ENCODE measurements at regions of chr20 and their contacts with region 1.

Region 1: GRCh38 chr20:49775229-49775693 is 37.4 kb upstream of the SLC9A8 start:
- DNase-seq: peak; percentile 98
- H3K4me3 ChIP-seq: no peak overlapping the region
- H3K27ac ChIP-seq: peak overlapping the region; percentile 95
- H3K4me1 ChIP-seq: peaks cover 37% of the 10 kb centered on the region
- H3K27me3 ChIP-seq: no peaks in the 10 kb centered on the region
- CTCF ChIP-seq: no peak
- POLR2A ChIP-seq: peak; percentile 21

Region 2: GRCh38 chr20:49245921-49246740 is 529.1 kb before region 1 on chr20:
- CTCF ChIA-PET with region 1: no interaction called
- POLR2A ChIA-PET with region 1: no interaction called
- dilution Hi-C with region 1: no loop called
- intact Hi-C with region 1: no loop called
- DNase-seq: peak; percentile 72
- H3K4me3 ChIP-seq: no peak overlapping the region
- H3K27ac ChIP-seq: no peak overlapping the region
- H3K4me1 ChIP-seq: peaks cover 26% of the 10 kb centered on the region
- H3K27me3 ChIP-seq: no peaks in the 10 kb centered on the region
- CTCF ChIP-seq: peak; percentile 68
- POLR2A ChIP-seq: no peak

Region 3: DNA sequence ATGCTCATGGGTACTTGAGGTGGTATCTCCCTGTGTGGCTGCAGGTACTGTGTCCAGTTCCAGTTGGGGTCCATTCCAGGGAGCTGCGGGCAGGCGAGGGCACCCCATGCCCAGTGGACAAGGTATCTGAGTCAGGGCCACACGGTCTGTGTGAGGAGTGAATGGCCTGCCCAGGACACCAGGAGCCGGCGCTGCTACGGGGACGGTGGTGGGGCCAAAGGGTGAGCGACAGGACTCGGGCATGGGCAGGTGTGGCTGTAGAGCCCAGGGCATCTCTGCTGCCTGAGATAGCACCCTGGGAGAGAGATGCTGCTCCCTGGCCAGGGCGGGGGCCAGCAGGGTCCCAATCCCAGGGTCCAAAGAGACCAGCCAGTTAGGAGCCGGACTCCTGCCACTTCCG is 439.8 kb before region 1 on chr20:
- CTCF ChIA-PET with region 1: no interaction called
- POLR2A ChIA-PET with region 1: no interaction called
- dilution Hi-C with region 1: no loop called
- intact Hi-C with region 1: no loop called
- DNase-seq: no peak
- H3K4me3 ChIP-seq: no peak overlapping the region
- H3K27ac ChIP-seq: no peak overlapping the region
- H3K4me1 ChIP-seq: no peaks in the 10 kb centered on the region
- H3K27me3 ChIP-seq: peaks cover 0 to 6% of the 10 kb centered on the region in 2 experiments
- CTCF ChIP-seq: no peak
- POLR2A ChIP-seq: no peak

Region 4: DNA sequence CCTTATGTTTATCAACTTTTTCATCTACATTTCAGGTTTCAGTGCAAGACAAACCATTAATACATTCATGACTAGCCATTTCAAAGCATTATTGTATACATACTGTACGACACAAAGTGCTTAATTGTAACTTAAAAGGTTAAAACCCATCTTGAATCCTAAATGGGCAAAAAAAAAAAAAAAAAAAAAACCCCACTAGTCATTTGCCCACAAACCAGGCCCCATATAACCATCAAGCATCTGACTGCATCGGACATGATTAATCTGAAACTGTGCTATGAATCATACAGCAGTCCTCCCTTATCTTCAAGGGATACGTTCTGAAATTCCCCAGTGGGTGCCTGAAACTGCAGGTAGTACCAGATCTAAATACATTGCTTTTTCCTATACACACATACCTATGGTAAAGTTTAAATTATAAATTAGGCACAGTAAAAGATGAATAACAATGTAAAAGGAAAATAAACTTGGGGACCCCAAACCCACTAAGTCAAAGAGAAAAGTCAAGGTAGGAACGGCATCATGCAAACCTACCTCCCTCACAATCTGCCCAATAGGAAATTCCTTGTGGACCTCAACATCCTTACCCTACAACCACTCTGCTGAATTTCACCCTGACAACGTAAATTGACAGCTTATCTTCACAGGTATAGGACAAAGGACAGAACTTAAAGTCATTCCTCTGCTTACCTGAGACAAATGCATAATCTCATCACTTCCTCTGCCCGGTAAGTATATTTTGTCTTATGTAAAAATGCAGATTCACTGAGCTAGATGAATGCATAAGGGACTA is 75.9 kb before region 1 on chr20:
- CTCF ChIA-PET with region 1: interaction called, 4 read pairs
- POLR2A ChIA-PET with region 1: no interaction called
- dilution Hi-C with region 1: no loop called
- intact Hi-C with region 1: loop called (anchors 1 kb)
- DNase-seq: peak; percentile 57
- H3K4me3 ChIP-seq: no peak overlapping the region
- H3K27ac ChIP-seq: peak overlapping the region; percentile 98
- H3K4me1 ChIP-seq: peaks cover 73% of the 10 kb centered on the region
- H3K27me3 ChIP-seq: no peaks in the 10 kb centered on the region
- CTCF ChIP-seq: no peak
- POLR2A ChIP-seq: no peak

Region 5: DNA sequence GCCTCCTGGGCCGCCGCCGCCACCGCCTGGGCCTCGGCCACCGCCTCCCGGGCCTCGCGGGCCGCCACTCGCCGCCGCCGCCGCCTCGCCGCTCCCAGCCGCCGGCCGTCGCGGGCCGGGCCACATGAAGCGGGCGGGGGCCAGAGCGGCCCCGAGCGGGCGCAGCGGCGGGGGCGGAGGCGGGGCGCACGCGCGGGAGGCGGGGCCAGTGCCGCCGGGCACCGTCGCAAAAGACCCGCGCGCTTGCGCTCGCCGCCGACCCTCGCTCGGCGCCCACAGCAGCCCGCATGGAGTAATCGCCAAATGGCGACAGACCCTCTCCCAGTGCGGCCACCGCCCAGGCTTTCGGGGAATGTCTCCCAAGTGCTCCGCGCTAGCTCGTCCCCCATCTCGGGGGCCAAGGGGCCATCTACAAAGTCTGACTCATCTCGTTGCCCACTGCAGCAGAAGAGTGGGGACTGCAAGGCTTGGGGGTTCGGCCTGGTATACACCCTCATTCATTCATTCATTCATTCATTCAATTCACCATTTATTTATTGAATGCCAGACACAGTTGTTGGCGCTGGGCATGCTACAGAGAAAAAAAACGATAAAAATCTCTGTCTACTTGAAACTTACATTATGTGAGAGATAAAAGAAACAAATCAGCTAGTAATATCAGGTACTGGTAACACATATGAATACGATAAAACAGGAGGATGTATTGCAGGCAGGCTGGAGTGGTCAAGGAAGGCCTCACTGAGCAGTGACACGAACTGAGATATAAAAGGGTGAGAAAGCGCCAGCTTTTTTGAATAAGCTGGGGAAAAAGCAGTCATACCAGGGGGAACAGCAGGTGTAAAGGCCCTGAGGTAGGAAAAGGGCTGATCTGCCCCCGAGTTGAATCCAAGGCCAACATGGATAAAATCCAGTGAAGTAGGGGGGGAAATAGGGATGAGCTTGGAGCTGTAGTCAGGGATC is 61.2 kb before region 1 on chr20 and contains the start of gene B4GALT5:
- CTCF ChIA-PET with region 1: interaction called, 3 read pairs
- POLR2A ChIA-PET with region 1: no interaction called
- dilution Hi-C with region 1: no loop called
- intact Hi-C with region 1: loop called (anchors 1 kb)
- DNase-seq: peak; percentile 78
- H3K4me3 ChIP-seq: peak within 1 kb of the TSS; percentile 81 to 93 (median 87)
- H3K27ac ChIP-seq: peak within 1 kb of the TSS; percentile 79
- H3K4me1 ChIP-seq: peaks cover 23% of the 10 kb centered on the region
- H3K27me3 ChIP-seq: no peaks in the 10 kb centered on the region
- CTCF ChIP-seq: no peak
- POLR2A ChIP-seq: peak; percentile 46
- total RNA-seq, gene B4GALT5: 58.5 and 70.1 TPM in 2 replicates

Region 6: DNA sequence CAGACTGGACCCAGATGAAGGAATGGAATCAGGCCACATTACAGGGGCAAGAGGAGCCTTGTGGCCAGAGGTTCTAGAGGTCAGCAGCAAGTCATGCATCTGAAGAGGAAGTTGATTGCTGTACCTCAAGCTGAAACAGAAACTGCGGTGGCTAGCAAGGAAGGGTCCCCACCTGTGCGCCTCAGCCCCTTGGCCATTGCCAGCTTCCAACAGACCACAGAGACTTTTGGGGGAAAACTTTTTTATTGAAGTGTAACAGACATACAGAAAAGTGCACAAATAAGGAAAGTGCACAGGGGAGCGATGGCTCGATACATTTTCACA is 10.6 kb after region 1 on chr20:
- CTCF ChIA-PET with region 1: interaction called, 7 read pairs
- POLR2A ChIA-PET with region 1: no interaction called
- dilution Hi-C with region 1: no loop called
- intact Hi-C with region 1: loop called (anchors 1 kb)
- DNase-seq: no peak
- H3K4me3 ChIP-seq: no peak overlapping the region
- H3K27ac ChIP-seq: no peak overlapping the region
- H3K4me1 ChIP-seq: peaks cover 20% of the 10 kb centered on the region
- H3K27me3 ChIP-seq: no peaks in the 10 kb centered on the region
- CTCF ChIP-seq: no peak
- POLR2A ChIP-seq: no peak

Region 7: DNA sequence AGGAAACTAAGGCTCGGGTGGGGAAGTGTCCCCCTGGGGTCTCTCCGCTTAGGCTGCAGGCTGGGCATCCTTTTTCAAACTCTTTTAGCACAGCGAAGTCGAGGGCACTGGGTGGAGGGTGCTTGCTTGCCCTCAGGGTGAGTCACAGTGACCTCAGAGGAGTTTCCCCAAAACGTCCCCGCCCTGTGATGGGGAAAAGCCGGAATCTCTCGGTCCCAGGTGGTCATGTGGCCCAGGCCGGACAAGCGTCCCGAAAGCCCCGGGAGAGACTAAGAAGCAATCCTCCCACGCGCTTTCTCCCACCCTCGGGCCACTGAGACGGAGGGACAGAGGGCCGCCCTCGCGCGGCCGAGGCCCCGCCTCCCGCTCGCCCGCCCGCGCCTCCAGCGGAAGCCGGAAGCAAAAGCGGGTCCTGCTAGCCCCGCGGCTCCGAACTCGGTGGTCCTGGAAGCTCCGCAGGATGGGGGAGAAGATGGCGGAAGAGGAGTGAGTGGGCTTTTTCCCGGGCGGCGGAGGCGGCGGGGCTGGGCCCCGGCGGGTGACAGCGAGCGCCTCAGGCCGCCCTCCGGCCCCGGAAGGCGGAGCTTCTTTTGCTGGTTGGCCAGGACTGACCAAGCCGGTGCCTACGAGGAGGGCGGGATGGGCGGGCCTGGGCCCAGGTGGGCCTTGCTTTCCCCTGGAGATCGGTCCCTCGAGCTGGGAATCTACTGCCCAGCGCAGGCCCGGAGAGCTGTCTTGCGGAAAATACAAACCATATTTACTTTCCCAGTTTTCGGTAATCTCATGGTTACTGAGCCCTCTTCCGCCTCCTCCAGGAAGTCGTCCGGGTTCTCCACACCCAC is 37.4 kb after region 1 on chr20 and contains the start of gene SLC9A8:
- CTCF ChIA-PET with region 1: interaction called, 8 read pairs
- POLR2A ChIA-PET with region 1: no interaction called
- dilution Hi-C with region 1: no loop called
- intact Hi-C with region 1: loop called (anchors 1 kb)
- DNase-seq: peak; percentile 87
- H3K4me3 ChIP-seq: peak within 1 kb of the TSS; percentile 89 to 91 (median 91)
- H3K27ac ChIP-seq: peak within 1 kb of the TSS; percentile 82
- H3K4me1 ChIP-seq: peaks cover 12% of the 10 kb centered on the region
- H3K27me3 ChIP-seq: no peaks in the 10 kb centered on the region
- CTCF ChIP-seq: peak; percentile 27 to 60
- POLR2A ChIP-seq: peak; percentile 77
- total RNA-seq, gene SLC9A8: 11.2 and 14.4 TPM in 2 replicates

Region 8: DNA sequence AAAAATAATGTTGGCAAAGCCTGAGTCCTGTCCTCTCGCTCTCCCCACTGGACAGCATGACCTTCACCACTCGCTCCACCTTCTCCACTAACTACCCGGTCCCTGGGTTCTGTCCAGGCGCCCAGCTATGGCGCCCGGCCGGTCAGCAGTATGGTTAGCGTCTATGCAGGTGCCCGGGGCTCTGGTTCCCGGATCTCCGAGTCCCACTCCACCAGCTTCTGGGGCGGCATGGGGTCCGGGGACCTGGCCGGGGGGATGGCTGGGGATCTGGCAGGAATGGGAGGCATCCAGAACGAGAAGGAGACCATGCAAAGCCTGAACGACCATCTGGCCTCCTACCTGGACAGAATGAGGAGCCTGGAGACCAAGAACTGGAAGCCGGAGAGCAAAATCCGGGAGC is 181.4 kb after region 1 on chr20:
- CTCF ChIA-PET with region 1: no interaction called
- POLR2A ChIA-PET with region 1: no interaction called
- dilution Hi-C with region 1: no loop called
- intact Hi-C with region 1: no loop called
- DNase-seq: no peak
- H3K4me3 ChIP-seq: no peak overlapping the region
- H3K27ac ChIP-seq: no peak overlapping the region
- H3K4me1 ChIP-seq: no peaks in the 10 kb centered on the region
- H3K27me3 ChIP-seq: no peaks in the 10 kb centered on the region
- CTCF ChIP-seq: no peak
- POLR2A ChIP-seq: no peak

Region 9: DNA sequence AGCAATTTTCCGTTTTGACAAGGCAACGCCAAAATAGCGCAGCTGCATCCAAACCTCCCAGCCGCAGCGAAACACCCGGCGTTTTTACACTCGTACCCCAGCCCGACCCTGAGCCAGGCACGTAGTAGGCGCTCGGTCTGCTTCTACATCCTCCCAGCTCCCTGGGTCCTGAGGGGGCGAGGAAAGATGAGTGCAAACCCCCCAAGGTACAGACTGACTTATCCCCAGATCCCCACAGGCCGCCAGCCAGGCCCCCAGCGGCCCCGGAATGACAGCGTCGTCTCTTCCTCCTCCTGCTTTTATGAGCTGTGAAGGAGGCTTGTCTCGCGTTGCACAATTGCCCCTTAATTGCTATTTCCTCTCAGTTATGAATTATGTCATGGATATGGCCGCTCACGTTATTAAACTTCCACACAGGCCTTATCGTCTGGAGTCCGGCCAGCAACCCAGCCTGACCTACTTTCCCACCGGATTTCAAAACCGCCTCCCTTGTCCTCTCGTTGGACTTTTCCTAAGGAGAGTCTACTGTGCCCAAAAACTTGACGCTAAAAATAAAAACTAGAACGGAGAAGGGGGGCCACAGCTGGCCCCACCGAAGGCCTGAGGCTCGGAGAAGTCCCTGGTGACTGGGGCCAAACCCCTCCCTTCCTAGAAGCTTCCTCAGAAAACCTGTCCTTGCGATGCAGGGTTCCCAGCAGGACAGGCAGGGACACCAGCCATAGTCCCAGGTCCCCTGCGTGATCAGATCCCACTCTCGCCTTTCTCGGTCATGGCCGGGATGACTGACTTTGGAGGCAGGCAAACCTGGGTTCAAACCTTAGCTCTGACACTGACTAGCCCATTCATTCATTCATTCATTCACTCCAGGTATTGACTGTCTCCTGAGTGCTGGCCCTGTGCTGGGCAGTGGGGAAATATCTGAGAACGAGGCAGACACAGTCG is 604.1 kb after region 1 on chr20:
- CTCF ChIA-PET with region 1: no interaction called
- POLR2A ChIA-PET with region 1: no interaction called
- dilution Hi-C with region 1: no loop called
- intact Hi-C with region 1: no loop called
- DNase-seq: peak; percentile 78
- H3K4me3 ChIP-seq: no peak overlapping the region
- H3K27ac ChIP-seq: no peak overlapping the region
- H3K4me1 ChIP-seq: peaks cover 24% of the 10 kb centered on the region
- H3K27me3 ChIP-seq: peaks cover 0 to 5% of the 10 kb centered on the region in 2 experiments
- CTCF ChIP-seq: no peak
- POLR2A ChIP-seq: no peak

Measured in endothelial cell of umbilical vein (primary cell).